ENCODE measurements at regions of chr3 and their contacts with region 1.

Region 1: GRCh38 chr3:49411968-49412631 is at the starts of genes RHOA and TCTA:
- DNase-seq: peak; percentile 100
- total RNA-seq, gene RHOA: 530 to 640 TPM
- total RNA-seq, gene TCTA: 20.8 to 33.6 TPM

Region 2: DNA sequence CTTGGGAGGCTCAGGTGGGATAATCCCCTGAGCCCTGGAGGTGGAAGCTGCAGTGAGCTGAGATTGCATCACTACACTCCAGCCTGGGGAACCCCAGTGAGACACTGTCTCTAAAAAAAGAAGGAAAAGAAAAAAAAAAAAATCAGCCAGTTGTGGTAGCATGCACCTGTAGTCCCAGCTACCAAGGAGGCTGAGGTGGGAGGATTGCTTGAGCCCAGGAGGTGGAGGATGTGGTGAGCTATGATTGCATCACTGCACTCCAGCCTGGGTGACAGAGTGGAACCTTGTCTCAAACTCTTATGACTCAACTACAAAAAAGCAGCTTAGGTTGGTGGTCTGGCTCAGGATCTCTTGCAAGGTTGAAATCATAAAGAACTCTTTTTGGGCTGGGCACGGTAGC is 34.6 kb before region 1 on chr3:
- intact Hi-C with region 1: loop called in 1 of 2 experiments (anchors 5 kb)
- DNase-seq: no peak

Region 3: GRCh38 chr3:50350527-50351322 is 938.6 kb after region 1 on chr3 and contains the starts of genes CYB561D2 and NPRL2:
- intact Hi-C with region 1: no loop called
- DNase-seq: peak; percentile 99
- total RNA-seq, gene CYB561D2: 7.9 to 10.5 TPM
- total RNA-seq, gene NPRL2: 10.6 to 17.4 TPM

Measured in posterior vena cava (tissue), 2 donors.